GM12878 (cell line): ENCODE measurements at regions of chr14 and their contacts with region 1.

Region 1: DNA sequence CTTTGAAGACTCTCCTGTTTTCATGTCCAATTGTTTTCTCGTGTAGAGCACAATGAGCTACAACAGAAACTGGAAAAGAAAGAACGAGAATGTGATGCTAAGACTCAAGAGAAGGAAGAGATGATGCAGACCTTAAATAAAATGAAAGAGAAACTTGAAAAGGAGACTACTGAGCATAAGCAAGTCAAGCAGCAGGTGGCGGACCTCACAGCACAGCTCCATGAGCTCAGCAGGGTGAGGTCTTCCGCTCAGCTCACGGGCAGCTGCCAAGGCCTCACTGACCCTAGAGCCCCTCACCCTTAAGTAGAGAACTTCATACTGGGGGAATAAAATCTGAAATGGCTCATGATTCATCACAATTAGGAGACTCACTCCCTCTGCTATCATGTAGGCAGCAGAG is 134.7 kb downstream of the GPR135 start:
- DNase-seq: no peak
- ATAC-seq: peak; percentile 93
- H3K4me3 ChIP-seq: no peak overlapping the region
- H3K27ac ChIP-seq: peak overlapping the region; percentile 69
- H3K4me1 ChIP-seq: peaks cover 5% of the 10 kb centered on the region
- H3K27me3 ChIP-seq: no peaks in the 10 kb centered on the region
- CTCF ChIP-seq: peak in 2 of 3 experiments; percentile 16 to 32; a peak in 3 of 6 replicates
- EP300 ChIP-seq: no peak
- POLR2A ChIP-seq: peak; percentile 73
- RAD21 ChIP-seq: peak; percentile 50

Region 2: DNA sequence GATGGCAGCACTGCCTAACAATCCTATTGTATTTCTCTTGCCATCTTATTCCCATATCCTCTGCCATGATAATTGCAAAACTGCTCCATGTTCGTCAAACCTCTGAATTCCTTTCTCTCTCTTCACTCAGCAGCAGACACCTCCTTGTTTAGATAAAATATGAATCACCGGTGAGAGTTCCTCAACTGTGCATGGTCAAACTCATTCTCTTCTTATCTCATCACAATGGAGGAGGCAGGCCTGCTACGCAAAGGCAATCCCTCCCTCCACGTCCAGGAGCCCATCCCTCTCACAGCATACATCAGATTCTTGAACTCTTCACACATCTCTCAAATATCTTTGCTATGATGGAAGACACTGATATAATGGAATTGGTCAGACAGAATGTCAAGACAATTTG is 232.1 kb before region 1 on chr14:
- CTCF ChIA-PET with region 1: no interaction called
- POLR2A ChIA-PET with region 1: no interaction called
- RAD21 ChIA-PET with region 1: no interaction called
- SMC1A ChIA-PET with region 1: no interaction called
- in situ Hi-C with region 1: no loop called
- intact Hi-C with region 1: no loop called
- DNase-seq: no peak
- ATAC-seq: no peak
- H3K4me3 ChIP-seq: no peak overlapping the region
- H3K27ac ChIP-seq: no peak overlapping the region
- H3K4me1 ChIP-seq: no peaks in the 10 kb centered on the region
- H3K27me3 ChIP-seq: no peaks in the 10 kb centered on the region; a peak in 2 of 4 replicates
- CTCF ChIP-seq: no peak
- EP300 ChIP-seq: no peak
- POLR2A ChIP-seq: no peak
- RAD21 ChIP-seq: no peak

Region 3: GRCh38 chr14:59313144-59313651 is 17.3 kb before region 1 on chr14:
- CTCF ChIA-PET with region 1: interaction called, 10 read pairs
- POLR2A ChIA-PET with region 1: no interaction called
- RAD21 ChIA-PET with region 1: interaction called, 3 read pairs
- SMC1A ChIA-PET with region 1: interaction called, 4 read pairs
- in situ Hi-C with region 1: no loop called
- intact Hi-C with region 1: no loop called
- DNase-seq: peak; percentile 60
- ATAC-seq: peak; percentile 80
- H3K4me3 ChIP-seq: no peak overlapping the region
- H3K27ac ChIP-seq: peak overlapping the region; percentile 14; the same call in 1 of the 2 replicates
- H3K4me1 ChIP-seq: peaks cover 3% of the 10 kb centered on the region; the same call in 1 of the 2 replicates
- H3K27me3 ChIP-seq: no peaks in the 10 kb centered on the region
- CTCF ChIP-seq: no peak
- EP300 ChIP-seq: no peak
- POLR2A ChIP-seq: no peak
- RAD21 ChIP-seq: no peak

Region 4: DNA sequence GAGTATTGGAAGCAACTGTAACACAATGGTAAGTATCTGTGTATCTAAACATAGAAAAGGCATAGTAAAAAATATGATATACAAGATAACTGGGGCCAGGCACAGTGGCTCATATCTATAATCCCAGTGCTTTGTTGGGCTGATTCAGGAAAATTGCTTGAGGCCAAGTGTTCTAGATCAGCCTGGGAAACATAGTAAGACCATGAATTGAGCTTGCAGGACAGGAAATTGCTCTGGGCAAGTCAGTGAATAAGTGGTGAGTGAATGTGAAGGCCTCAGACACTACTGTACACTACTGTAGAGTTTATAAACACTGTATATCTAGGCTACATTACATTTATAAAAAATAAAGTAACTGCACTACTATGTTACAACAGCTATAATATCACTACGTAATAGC is 59.5 kb after region 1 on chr14:
- CTCF ChIA-PET with region 1: no interaction called
- POLR2A ChIA-PET with region 1: no interaction called
- RAD21 ChIA-PET with region 1: no interaction called
- SMC1A ChIA-PET with region 1: no interaction called
- in situ Hi-C with region 1: no loop called
- intact Hi-C with region 1: no loop called
- DNase-seq: no peak
- ATAC-seq: no peak
- H3K4me3 ChIP-seq: no peak overlapping the region
- H3K27ac ChIP-seq: no peak overlapping the region
- H3K4me1 ChIP-seq: no peaks in the 10 kb centered on the region
- H3K27me3 ChIP-seq: no peaks in the 10 kb centered on the region
- CTCF ChIP-seq: no peak
- EP300 ChIP-seq: no peak
- POLR2A ChIP-seq: no peak
- RAD21 ChIP-seq: no peak

Region 5: GRCh38 chr14:59534361-59534987 is 204.0 kb after region 1 on chr14:
- CTCF ChIA-PET with region 1: no interaction called
- POLR2A ChIA-PET with region 1: no interaction called
- RAD21 ChIA-PET with region 1: no interaction called
- SMC1A ChIA-PET with region 1: no interaction called
- in situ Hi-C with region 1: no loop called
- intact Hi-C with region 1: no loop called
- DNase-seq: no peak
- ATAC-seq: no peak
- H3K4me3 ChIP-seq: no peak overlapping the region
- H3K27ac ChIP-seq: no peak overlapping the region
- H3K4me1 ChIP-seq: no peaks in the 10 kb centered on the region
- H3K27me3 ChIP-seq: no peaks in the 10 kb centered on the region; a peak in 2 of 4 replicates
- CTCF ChIP-seq: no peak
- EP300 ChIP-seq: no peak
- POLR2A ChIP-seq: no peak
- RAD21 ChIP-seq: no peak